GM12878 (cell line): ENCODE measurements at regions of chr7 and their contacts with region 1.

Region 1: GRCh38 chr7:143050931-143051330 is 1.2 kb upstream of the OR6V1 start:
- DNase-seq: no peak
- ATAC-seq: no peak
- H3K4me3 ChIP-seq: no peak overlapping the region
- H3K27ac ChIP-seq: no peak overlapping the region
- H3K4me1 ChIP-seq: no peaks in the 10 kb centered on the region
- H3K27me3 ChIP-seq: no peaks in the 10 kb centered on the region; a peak in 1 of 4 replicates
- CTCF ChIP-seq: no peak
- EP300 ChIP-seq: no peak
- POLR2A ChIP-seq: no peak
- RAD21 ChIP-seq: no peak

Region 2: DNA sequence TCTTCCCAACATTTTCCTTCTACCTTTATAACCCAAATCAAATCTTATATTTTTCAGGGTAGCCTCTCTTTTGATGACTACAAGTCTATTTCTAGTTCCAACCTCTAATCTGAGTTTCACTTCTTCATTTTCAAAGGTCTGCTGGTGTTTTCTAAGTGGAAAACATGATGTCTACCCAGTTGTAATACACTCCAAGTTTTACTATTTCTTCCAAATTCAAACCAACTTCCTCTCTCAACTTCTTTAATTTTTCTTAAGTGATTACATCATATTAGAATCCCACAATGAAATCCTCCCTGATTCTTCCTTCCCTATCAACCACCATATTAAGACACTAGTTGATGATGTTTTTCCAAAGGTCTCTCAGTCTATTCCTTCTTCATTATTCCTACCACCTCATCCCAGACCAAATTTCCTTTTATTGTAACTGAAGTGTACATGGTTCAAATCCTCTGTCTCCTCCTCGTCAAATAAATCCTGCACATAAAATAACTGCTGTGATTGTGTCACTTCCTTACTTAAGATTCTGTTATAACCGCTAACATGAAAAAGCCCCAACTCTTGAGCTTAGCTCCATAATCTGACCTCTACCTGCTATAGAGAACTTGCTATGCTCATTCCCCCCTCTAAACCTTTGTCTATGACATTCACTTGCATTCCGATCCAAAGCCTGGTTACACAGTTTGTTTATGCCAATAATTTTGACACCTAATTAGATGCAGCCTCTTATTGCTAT is 1090.1 kb before region 1 on chr7:
- CTCF ChIA-PET with region 1: no interaction called
- POLR2A ChIA-PET with region 1: no interaction called
- RAD21 ChIA-PET with region 1: no interaction called
- SMC1A ChIA-PET with region 1: no interaction called
- in situ Hi-C with region 1: no loop called
- intact Hi-C with region 1: no loop called
- DNase-seq: no peak
- ATAC-seq: peak; percentile 84
- H3K4me3 ChIP-seq: no peak overlapping the region
- H3K27ac ChIP-seq: no peak overlapping the region
- H3K4me1 ChIP-seq: no peaks in the 10 kb centered on the region
- H3K27me3 ChIP-seq: no peaks in the 10 kb centered on the region
- CTCF ChIP-seq: no peak
- EP300 ChIP-seq: no peak
- POLR2A ChIP-seq: no peak
- RAD21 ChIP-seq: no peak

Region 3: GRCh38 chr7:142053988-142054387 is 996.9 kb before region 1 on chr7:
- CTCF ChIA-PET with region 1: no interaction called
- POLR2A ChIA-PET with region 1: no interaction called
- RAD21 ChIA-PET with region 1: no interaction called
- SMC1A ChIA-PET with region 1: no interaction called
- in situ Hi-C with region 1: no loop called
- intact Hi-C with region 1: loop called (anchors 5 kb)
- DNase-seq: no peak
- ATAC-seq: no peak
- H3K4me3 ChIP-seq: no peak overlapping the region
- H3K27ac ChIP-seq: no peak overlapping the region
- H3K4me1 ChIP-seq: no peaks in the 10 kb centered on the region
- H3K27me3 ChIP-seq: no peaks in the 10 kb centered on the region
- CTCF ChIP-seq: no peak
- EP300 ChIP-seq: no peak
- POLR2A ChIP-seq: no peak
- RAD21 ChIP-seq: no peak

Region 4: DNA sequence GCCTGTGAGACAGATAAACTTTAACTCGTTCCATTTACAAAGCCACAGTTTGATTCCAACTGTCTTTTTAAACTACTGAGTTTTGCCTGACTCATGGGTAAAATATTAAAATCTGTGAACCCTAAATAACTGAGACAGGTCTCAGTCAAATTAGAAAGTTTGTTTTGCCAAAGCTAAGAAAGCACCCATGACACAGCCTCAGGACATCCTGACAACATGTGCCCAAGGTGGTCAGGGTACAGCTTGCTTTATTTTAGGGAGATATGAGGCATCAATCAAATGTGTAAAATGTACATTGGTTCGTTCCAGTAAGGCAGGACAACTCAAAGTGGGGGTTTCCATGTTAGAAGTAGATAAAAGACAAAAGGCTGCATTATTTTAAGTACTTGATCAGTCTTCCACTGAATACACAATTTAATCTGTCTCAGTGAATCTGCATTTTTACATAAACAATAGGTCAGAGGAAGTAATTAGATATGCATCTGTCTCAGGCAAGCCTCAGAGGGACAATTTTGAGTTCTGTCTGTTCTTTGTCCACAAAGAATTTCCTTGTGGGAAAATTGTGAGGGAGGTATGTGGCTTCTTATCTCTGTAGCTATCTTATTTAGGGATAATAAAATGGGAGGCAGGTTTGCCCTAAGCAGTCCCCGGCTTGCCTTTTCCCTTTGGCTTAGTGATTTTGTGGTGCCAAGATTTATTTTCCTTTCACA is 69.9 kb after region 1 on chr7:
- CTCF ChIA-PET with region 1: no interaction called
- POLR2A ChIA-PET with region 1: no interaction called
- RAD21 ChIA-PET with region 1: no interaction called
- SMC1A ChIA-PET with region 1: no interaction called
- in situ Hi-C with region 1: no loop called
- intact Hi-C with region 1: no loop called
- DNase-seq: no peak
- ATAC-seq: no peak
- H3K4me3 ChIP-seq: no peak overlapping the region
- H3K27ac ChIP-seq: no peak overlapping the region
- H3K4me1 ChIP-seq: no peaks in the 10 kb centered on the region
- H3K27me3 ChIP-seq: no peaks in the 10 kb centered on the region
- CTCF ChIP-seq: no peak
- EP300 ChIP-seq: no peak
- POLR2A ChIP-seq: no peak
- RAD21 ChIP-seq: no peak